CD4-positive, alpha-beta T cell (primary cell): ENCODE measurements at regions of chr2 and their contacts with region 1.

Region 1: GRCh38 chr2:62698653-62699052 is 6.9 kb upstream of the EHBP1 start:
- DNase-seq: no peak
- ATAC-seq: no peak
- H3K4me3 ChIP-seq: no peak overlapping the region
- H3K4me3 Mint-ChIP-seq: no peak overlapping the region
- H3K27ac ChIP-seq: no peak overlapping the region
- H3K27ac Mint-ChIP-seq: no peak overlapping the region
- H3K4me1 ChIP-seq: no peaks in the 10 kb centered on the region
- H3K4me1 Mint-ChIP-seq: no peaks in the 10 kb centered on the region
- H3K27me3 ChIP-seq: peaks cover 0 to 4% of the 10 kb centered on the region in 2 experiments
- H3K27me3 Mint-ChIP-seq: peaks cover 13% of the 10 kb centered on the region
- CTCF ChIP-seq: no peak

Region 2: DNA sequence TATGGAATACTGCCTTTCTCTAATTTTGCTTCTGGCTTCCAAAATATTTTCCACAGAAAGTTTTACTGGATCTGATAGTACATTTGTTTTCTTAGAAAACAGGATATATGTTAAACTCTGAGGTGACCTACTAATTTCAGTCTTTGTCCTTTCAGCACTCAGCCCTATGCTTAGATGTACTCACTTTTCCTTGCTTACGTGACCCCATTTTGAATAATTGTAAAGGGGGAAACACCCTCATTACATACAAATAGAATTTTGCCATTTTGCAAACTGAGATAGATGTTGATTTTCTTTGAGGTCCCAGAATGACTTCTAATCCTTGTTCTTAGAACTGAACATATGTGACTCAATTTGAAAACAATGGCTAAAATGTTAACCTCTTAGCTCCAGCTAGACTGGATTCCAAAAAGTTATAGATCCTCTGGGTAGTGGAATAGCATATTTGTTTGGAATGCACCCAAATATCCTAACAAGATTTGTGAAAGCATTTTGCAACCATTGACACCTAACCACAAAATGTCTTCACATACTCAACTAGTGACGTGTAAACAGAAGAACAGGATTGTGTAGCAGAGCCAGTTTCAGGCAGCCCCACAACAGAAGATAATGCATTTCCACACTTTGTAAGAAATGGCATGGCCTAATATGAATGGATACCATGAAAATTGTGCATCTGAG is 37.9 kb before region 1 on chr2:
- CTCF ChIA-PET with region 1: no interaction called
- POLR2A ChIA-PET with region 1: no interaction called
- intact Hi-C with region 1: no loop called
- DNase-seq: no peak
- ATAC-seq: no peak
- H3K4me3 ChIP-seq: no peak overlapping the region
- H3K4me3 Mint-ChIP-seq: no peak overlapping the region
- H3K27ac ChIP-seq: no peak overlapping the region
- H3K27ac Mint-ChIP-seq: no peak overlapping the region
- H3K4me1 ChIP-seq: no peaks in the 10 kb centered on the region
- H3K4me1 Mint-ChIP-seq: no peaks in the 10 kb centered on the region
- H3K27me3 ChIP-seq: peaks cover 0 to 3% of the 10 kb centered on the region in 2 experiments
- H3K27me3 Mint-ChIP-seq: no peaks in the 10 kb centered on the region
- CTCF ChIP-seq: no peak

Region 3: DNA sequence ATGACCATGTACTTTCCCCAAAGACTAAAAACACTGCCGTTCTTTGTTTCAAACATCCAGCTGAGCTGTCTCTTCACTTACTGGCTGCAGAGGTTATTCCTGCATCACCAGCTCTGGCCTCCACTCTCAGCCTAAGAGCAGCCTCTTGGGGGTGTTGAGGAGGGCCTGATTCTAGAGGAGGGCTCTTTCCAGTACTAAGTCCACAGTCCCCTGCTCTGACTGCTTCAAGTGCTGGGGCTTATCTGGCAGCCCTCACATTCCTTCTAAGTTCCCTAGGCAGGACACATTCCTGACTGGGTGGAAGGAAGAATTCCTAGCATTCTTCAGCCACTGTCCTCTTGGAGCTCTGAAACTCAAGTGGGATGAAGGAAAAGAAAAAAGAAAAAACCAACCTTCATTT is 26.1 kb before region 1 on chr2:
- CTCF ChIA-PET with region 1: no interaction called
- POLR2A ChIA-PET with region 1: no interaction called
- intact Hi-C with region 1: no loop called
- DNase-seq: no peak
- ATAC-seq: no peak
- H3K4me3 ChIP-seq: no peak overlapping the region
- H3K4me3 Mint-ChIP-seq: no peak overlapping the region
- H3K27ac ChIP-seq: no peak overlapping the region
- H3K27ac Mint-ChIP-seq: no peak overlapping the region
- H3K4me1 ChIP-seq: no peaks in the 10 kb centered on the region
- H3K4me1 Mint-ChIP-seq: no peaks in the 10 kb centered on the region
- H3K27me3 ChIP-seq: no peaks in the 10 kb centered on the region
- H3K27me3 Mint-ChIP-seq: no peaks in the 10 kb centered on the region
- CTCF ChIP-seq: no peak

Region 4: GRCh38 chr2:62713837-62714236 is 15.2 kb after region 1 on chr2:
- CTCF ChIA-PET with region 1: no interaction called
- POLR2A ChIA-PET with region 1: no interaction called
- intact Hi-C with region 1: loop called in 1 of 2 experiments (anchors 1 kb)
- DNase-seq: no peak
- ATAC-seq: no peak
- H3K4me3 ChIP-seq: no peak overlapping the region
- H3K4me3 Mint-ChIP-seq: no peak overlapping the region
- H3K27ac ChIP-seq: no peak overlapping the region
- H3K27ac Mint-ChIP-seq: no peak overlapping the region
- H3K4me1 ChIP-seq: no peaks in the 10 kb centered on the region
- H3K4me1 Mint-ChIP-seq: peaks cover 21% of the 10 kb centered on the region
- H3K27me3 ChIP-seq: no peaks in the 10 kb centered on the region
- H3K27me3 Mint-ChIP-seq: no peaks in the 10 kb centered on the region
- CTCF ChIP-seq: no peak